Body of pancreas (tissue), 4 donors: ENCODE measurements at regions of chr10 and their contacts with region 1.

Region 1: GRCh38 chr10:27446091-27446918 is 57.8 kb upstream of the RAB18 start:
- DNase-seq: no peak
- ATAC-seq: no peak
- H3K4me3 ChIP-seq: no peak overlapping the region
- H3K27ac ChIP-seq: no peak overlapping the region
- H3K4me1 ChIP-seq: no peaks in the 10 kb centered on the region
- H3K27me3 ChIP-seq: no peaks in the 10 kb centered on the region
- CTCF ChIP-seq: peak in 6 of 7 experiments; percentile 37 to 51 (median 48)
- POLR2A ChIP-seq: no peak

Region 2: GRCh38 chr10:26977635-26978034 is 468.7 kb before region 1 on chr10:
- intact Hi-C with region 1: no loop called
- DNase-seq: no peak
- ATAC-seq: no peak
- H3K4me3 ChIP-seq: no peak overlapping the region
- H3K27ac ChIP-seq: no peak overlapping the region
- H3K4me1 ChIP-seq: no peaks in the 10 kb centered on the region
- H3K27me3 ChIP-seq: no peaks in the 10 kb centered on the region
- CTCF ChIP-seq: no peak
- POLR2A ChIP-seq: no peak

Region 3: GRCh38 chr10:27360581-27361172 is 85.6 kb before region 1 on chr10:
- intact Hi-C with region 1: no loop called
- DNase-seq: peak; percentile 75 to 83 (median 80)
- ATAC-seq: peak; percentile 65
- H3K4me3 ChIP-seq: no peak overlapping the region
- H3K27ac ChIP-seq: no peak overlapping the region
- H3K4me1 ChIP-seq: no peaks in the 10 kb centered on the region
- H3K27me3 ChIP-seq: no peaks in the 10 kb centered on the region
- CTCF ChIP-seq: peak; percentile 26 to 89 (median 69)
- POLR2A ChIP-seq: no peak

Region 4: GRCh38 chr10:27494116-27494805 is 48.0 kb after region 1 on chr10:
- intact Hi-C with region 1: no loop called
- DNase-seq: no peak
- ATAC-seq: no peak
- H3K4me3 ChIP-seq: no peak overlapping the region
- H3K27ac ChIP-seq: no peak overlapping the region
- H3K4me1 ChIP-seq: no peaks in the 10 kb centered on the region
- H3K27me3 ChIP-seq: no peaks in the 10 kb centered on the region
- CTCF ChIP-seq: no peak
- POLR2A ChIP-seq: no peak

Region 5: GRCh38 chr10:27578316-27578715 is 132.0 kb after region 1 on chr10:
- intact Hi-C with region 1: no loop called
- DNase-seq: no peak
- ATAC-seq: no peak
- H3K4me3 ChIP-seq: no peak overlapping the region
- H3K27ac ChIP-seq: no peak overlapping the region
- H3K4me1 ChIP-seq: no peaks in the 10 kb centered on the region
- H3K27me3 ChIP-seq: no peaks in the 10 kb centered on the region
- CTCF ChIP-seq: no peak
- POLR2A ChIP-seq: no peak

Region 6: DNA sequence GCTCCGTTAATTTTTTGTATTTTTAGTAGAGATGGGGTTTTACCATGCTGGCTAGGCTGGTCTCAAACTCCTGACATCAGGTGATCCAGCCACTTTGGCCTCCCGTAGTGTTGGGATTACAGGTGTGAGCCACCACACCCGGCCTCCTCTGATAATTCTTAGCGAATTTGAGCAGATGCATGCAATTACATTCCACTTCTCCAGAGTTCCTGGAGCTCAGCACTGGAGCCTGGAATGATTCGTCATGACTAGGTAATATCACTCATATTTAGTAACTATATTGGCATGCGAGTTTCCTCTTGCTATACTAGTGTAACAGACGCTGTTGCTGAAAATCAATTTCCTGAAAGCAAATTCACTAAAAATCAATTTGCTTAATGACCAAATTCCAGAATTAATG is 212.5 kb after region 1 on chr10:
- intact Hi-C with region 1: loop called (anchors 10 kb)
- DNase-seq: no peak
- ATAC-seq: no peak
- H3K4me3 ChIP-seq: no peak overlapping the region
- H3K27ac ChIP-seq: no peak overlapping the region
- H3K4me1 ChIP-seq: no peaks in the 10 kb centered on the region
- H3K27me3 ChIP-seq: no peaks in the 10 kb centered on the region
- CTCF ChIP-seq: no peak
- POLR2A ChIP-seq: no peak

Region 7: DNA sequence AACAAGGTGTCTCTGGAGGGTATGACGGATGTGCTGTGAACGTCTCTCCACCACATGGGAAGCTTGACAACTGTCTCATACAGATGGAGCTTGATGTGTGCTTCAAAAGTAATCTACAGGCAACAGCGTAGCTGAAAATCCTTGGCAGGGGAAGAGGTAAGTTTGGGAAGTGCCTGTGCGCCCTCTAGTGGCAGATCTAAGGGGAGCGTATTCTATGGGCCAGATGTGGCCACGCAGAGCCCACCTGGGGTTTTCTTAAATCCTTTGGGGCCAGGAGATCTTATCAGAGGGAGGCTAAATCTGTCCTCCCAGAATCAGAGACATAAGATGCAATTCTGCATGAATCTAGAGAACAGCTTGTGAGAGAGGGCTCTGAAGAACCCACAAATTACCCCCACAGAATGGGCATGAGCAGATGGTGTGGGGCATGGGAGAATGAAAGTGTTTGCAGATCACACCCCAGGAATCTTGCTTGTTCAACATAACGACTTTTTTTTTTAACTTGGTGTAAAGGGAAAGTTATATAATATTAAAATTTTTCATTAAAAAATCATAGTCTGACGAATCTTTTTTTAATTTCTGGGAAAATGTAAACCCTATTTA is 947.8 kb after region 1 on chr10:
- intact Hi-C with region 1: loop called (anchors 10 kb)
- DNase-seq: peak; percentile 70 to 76 (median 72)
- ATAC-seq: peak; percentile 80
- H3K4me3 ChIP-seq: no peak overlapping the region
- H3K27ac ChIP-seq: no peak overlapping the region
- H3K4me1 ChIP-seq: no peaks in the 10 kb centered on the region
- H3K27me3 ChIP-seq: no peaks in the 10 kb centered on the region
- CTCF ChIP-seq: peak; percentile 73 to 89 (median 82)
- POLR2A ChIP-seq: no peak